ENCODE measurements at regions of chr13 and their contacts with region 1.

Region 1: GRCh38 chr13:109529964-109530363 is 256.4 kb downstream of the IRS2 start:
- DNase-seq: no peak
- ATAC-seq: no peak
- H3K4me3 ChIP-seq: no peak overlapping the region
- H3K27ac ChIP-seq: no peak overlapping the region
- H3K4me1 ChIP-seq: no peaks in the 10 kb centered on the region
- H3K27me3 ChIP-seq: peaks cover 33% of the 10 kb centered on the region
- CTCF ChIP-seq: no peak
- POLR2A ChIP-seq: no peak
- RAD21 ChIP-seq: no peak

Region 2: DNA sequence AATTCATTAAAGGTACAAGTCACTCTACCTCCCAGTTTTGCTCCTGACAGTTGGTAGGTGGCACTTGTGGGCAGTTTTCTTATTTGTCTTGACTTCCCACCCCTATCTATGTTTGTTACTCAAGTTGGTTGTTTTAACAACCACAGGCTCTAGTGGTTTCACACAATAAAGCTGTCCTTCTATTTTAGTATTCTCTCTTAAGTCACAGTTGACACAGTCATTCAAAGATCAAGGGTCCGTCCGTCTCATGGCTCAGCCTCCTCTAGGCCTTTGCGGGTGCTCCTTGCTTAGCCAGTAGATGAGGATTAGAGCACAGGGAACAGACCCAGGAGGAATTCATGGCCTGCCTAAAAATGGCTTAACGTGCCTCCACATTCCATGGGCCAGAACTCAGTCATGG is 317.3 kb before region 1 on chr13:
- CTCF ChIA-PET with region 1: no interaction called
- POLR2A ChIA-PET with region 1: interaction called, 11 read pairs
- dilution Hi-C with region 1: no loop called
- in situ Hi-C with region 1: no loop called
- intact Hi-C with region 1: no loop called
- DNase-seq: no peak
- ATAC-seq: no peak
- H3K4me3 ChIP-seq: no peak overlapping the region
- H3K27ac ChIP-seq: no peak overlapping the region
- H3K4me1 ChIP-seq: no peaks in the 10 kb centered on the region
- H3K27me3 ChIP-seq: no peaks in the 10 kb centered on the region
- CTCF ChIP-seq: no peak
- POLR2A ChIP-seq: no peak
- RAD21 ChIP-seq: no peak

Region 3: DNA sequence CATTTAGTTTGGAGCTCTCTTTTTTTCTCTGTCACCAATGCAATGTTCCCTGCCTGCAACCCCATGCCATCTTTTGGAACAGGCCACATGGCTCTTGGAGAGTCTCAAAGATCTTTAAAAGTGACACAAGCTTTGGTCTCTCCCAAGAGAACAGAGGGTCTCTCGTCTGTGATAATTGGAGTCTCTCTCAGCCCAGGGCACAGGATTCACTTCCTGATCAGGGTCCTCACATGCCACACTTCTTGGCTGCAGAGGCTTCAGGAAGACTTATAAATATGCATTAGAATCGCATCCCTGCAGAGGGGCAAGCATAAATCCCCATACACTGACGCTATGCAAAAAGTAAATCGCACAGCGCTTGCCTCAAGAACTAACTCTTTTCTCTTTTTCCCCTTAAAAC is 16.0 kb after region 1 on chr13:
- CTCF ChIA-PET with region 1: no interaction called
- POLR2A ChIA-PET with region 1: interaction called, 15 read pairs
- dilution Hi-C with region 1: no loop called
- in situ Hi-C with region 1: no loop called
- intact Hi-C with region 1: no loop called
- DNase-seq: no peak
- ATAC-seq: no peak
- H3K4me3 ChIP-seq: no peak overlapping the region
- H3K27ac ChIP-seq: no peak overlapping the region
- H3K4me1 ChIP-seq: no peaks in the 10 kb centered on the region
- H3K27me3 ChIP-seq: peaks cover 22% of the 10 kb centered on the region
- CTCF ChIP-seq: no peak
- POLR2A ChIP-seq: no peak
- RAD21 ChIP-seq: no peak

Measured in IMR-90 (cell line).